Right ventricle myocardium inferior (tissue), 1 donor: ENCODE measurements at regions of chrX and their contacts with region 1.

Region 1: GRCh38 chrX:25144043-25144940 is 128.5 kb upstream of the ARX start:
- DNase-seq: peak; percentile 51
- ATAC-seq: no peak

Region 2: GRCh38 chrX:24316111-24316510 is 828.2 kb before region 1 on chrX:
- intact Hi-C with region 1: no loop called
- DNase-seq: no peak
- ATAC-seq: no peak

Region 3: GRCh38 chrX:24380262-24381187 is 763.8 kb before region 1 on chrX:
- intact Hi-C with region 1: loop called (anchors 10 kb)
- DNase-seq: no peak
- ATAC-seq: peak; percentile 88

Region 4: DNA sequence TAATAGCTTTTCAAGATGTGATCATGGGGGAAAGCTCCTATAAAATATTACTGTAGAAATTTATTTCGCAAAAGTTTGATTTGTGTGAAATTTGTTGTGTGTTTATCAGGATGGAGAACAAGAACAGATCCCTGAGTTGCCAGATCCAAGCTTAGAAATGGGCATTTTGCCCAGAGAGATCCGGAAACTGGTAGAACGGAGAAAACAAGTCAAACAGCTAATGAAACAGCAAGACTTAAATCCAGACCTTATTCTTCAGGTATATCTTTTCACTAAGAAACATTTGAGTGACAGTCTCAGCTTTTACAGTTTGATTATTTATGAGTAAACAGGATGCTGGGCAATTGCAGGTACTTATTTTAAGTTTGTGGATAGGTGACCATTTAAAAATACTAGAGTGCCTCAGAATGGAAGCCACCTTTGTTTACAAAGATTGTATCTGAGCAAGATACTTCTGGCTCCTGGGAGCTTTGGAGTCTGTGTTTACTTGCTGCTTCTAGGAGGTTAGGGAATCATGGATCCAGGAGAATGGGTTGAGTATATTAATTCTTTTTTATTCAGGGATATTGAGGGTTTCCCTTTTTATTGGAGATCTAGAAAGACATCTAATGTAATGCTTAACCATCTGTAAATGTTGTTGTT is 396.0 kb before region 1 on chrX:
- intact Hi-C with region 1: loop called (anchors 2 kb)
- DNase-seq: no peak
- ATAC-seq: no peak

Region 5: GRCh38 chrX:24838629-24839028 is 305.7 kb before region 1 on chrX:
- intact Hi-C with region 1: loop called (anchors 2 kb)
- DNase-seq: no peak
- ATAC-seq: no peak

Region 6: GRCh38 chrX:24899391-24899790 is 244.9 kb before region 1 on chrX:
- intact Hi-C with region 1: no loop called
- DNase-seq: no peak
- ATAC-seq: no peak